A549 (cell line): ENCODE measurements at regions of chr1 and their contacts with region 1.

Region 1: DNA sequence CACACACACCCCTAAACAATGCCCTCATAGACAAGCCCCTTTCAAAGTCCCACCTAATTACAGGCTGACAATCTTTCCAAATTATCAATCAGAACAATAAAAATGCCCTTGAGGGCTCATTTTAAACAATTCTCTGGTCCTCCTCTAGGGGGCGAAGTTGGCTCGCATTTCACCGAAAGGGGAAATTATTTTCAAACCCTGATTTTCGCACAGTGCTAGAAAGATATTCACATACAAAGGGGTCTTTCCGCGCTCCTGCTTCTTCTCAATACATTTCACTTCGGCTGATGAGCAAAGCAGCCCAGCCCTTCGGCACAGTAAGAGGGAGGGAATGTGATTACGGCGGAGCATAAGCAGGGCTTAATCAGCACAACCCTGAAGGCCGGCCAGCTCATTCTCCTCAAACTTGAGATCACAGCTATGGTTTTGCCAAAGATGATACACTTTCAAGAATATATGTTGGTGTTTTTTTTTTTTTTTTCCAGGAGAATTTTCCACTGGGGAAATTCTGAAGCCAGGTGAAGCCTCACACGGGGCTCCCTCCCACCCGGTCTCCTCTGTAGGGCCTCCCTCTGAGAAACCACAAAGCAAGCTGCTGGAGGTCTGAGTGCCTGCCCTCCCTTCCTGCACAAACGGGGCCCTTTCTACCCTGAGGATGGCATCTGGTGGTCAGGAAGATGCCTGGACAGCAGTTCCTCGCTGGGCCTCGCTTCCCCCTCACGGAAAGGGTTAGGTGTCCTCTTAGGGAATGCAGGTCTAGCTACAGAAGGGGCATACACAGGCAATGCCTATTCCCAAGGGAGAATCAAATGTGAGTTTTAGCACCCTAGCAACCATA is 66.9 kb downstream of the GNG12 start:
- DNase-seq: peak in 1 of 2 experiments; percentile 53
- ATAC-seq: peak; percentile 69 to 78
- H3K4me3 ChIP-seq: no peak overlapping the region; the same call in 2 of the 3 replicates
- H3K27ac ChIP-seq: peak overlapping the region; percentile 76 to 92
- H3K4me1 ChIP-seq: peaks cover 77% of the 10 kb centered on the region
- CTCF ChIP-seq: peak; percentile 76
- EP300 ChIP-seq: no peak
- POLR2A ChIP-seq: no peak
- RAD21 ChIP-seq: peak; percentile 83 to 89

Region 2: GRCh38 chr1:67468066-67468718 is 298.2 kb before region 1 on chr1:
- CTCF ChIA-PET with region 1: no interaction called
- POLR2A ChIA-PET with region 1: no interaction called
- DNase-seq: no peak
- ATAC-seq: no peak
- H3K4me3 ChIP-seq: no peak overlapping the region
- H3K27ac ChIP-seq: no peak overlapping the region
- H3K4me1 ChIP-seq: no peaks in the 10 kb centered on the region
- CTCF ChIP-seq: no peak
- EP300 ChIP-seq: no peak
- POLR2A ChIP-seq: no peak
- RAD21 ChIP-seq: no peak

Region 3: GRCh38 chr1:67540733-67541125 is 225.6 kb before region 1 on chr1:
- CTCF ChIA-PET with region 1: interaction called, 197 read pairs
- POLR2A ChIA-PET with region 1: no interaction called
- DNase-seq: no peak
- ATAC-seq: no peak
- H3K4me3 ChIP-seq: no peak overlapping the region
- H3K27ac ChIP-seq: no peak overlapping the region
- H3K4me1 ChIP-seq: no peaks in the 10 kb centered on the region
- CTCF ChIP-seq: no peak
- EP300 ChIP-seq: no peak
- POLR2A ChIP-seq: no peak
- RAD21 ChIP-seq: no peak

Region 4: DNA sequence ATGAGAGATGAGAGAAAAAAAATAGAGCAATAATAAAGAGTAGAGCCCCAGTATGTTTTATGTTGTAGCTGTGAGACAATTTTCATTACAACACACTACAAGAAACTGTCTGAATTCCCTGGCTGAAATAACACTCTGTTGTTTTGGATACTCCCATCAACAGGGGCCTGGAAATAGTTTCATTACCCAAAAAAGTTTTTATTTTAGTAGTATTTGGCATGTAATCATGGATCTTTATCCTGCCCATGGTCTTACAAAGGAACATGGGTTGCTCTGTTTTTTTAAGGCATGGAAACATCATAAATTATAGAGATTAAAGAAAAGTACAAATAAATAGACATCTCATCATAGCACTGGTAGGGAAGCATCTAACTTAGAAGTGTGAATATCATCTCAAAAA is 10.7 kb after region 1 on chr1:
- CTCF ChIA-PET with region 1: interaction called, 16 read pairs
- POLR2A ChIA-PET with region 1: no interaction called
- DNase-seq: no peak
- ATAC-seq: no peak
- H3K4me3 ChIP-seq: no peak overlapping the region
- H3K27ac ChIP-seq: no peak overlapping the region
- H3K4me1 ChIP-seq: peaks cover 3% of the 10 kb centered on the region; the same call in 2 of the 3 replicates
- CTCF ChIP-seq: no peak
- EP300 ChIP-seq: no peak
- POLR2A ChIP-seq: no peak
- RAD21 ChIP-seq: no peak

Region 5: GRCh38 chr1:67832737-67833601 is 66.6 kb after region 1 on chr1 and contains the start of gene GNG12:
- CTCF ChIA-PET with region 1: interaction called, 27 read pairs
- POLR2A ChIA-PET with region 1: interaction called, 11 read pairs
- DNase-seq: peak; percentile 63 to 78
- ATAC-seq: peak; percentile 89 to 92
- H3K4me3 ChIP-seq: peak within 1 kb of the TSS; percentile 86
- H3K27ac ChIP-seq: peak within 1 kb of the TSS; percentile 97 to 99
- H3K4me1 ChIP-seq: peaks cover 42% of the 10 kb centered on the region
- CTCF ChIP-seq: no peak
- EP300 ChIP-seq: no peak
- POLR2A ChIP-seq: peak; percentile 16; the same call in 1 of the 2 replicates
- RAD21 ChIP-seq: peak in 1 of 2 experiments; percentile 27; a peak in 2 of 5 replicates
- polyA plus RNA-seq, gene GNG12: 104 and 132 TPM in 2 replicates

Region 6: GRCh38 chr1:67853704-67854103 is 87.3 kb after region 1 on chr1:
- CTCF ChIA-PET with region 1: interaction called, 37 read pairs
- POLR2A ChIA-PET with region 1: no interaction called
- DNase-seq: peak; percentile 59 to 83
- ATAC-seq: peak; percentile 76 to 86
- H3K4me3 ChIP-seq: no peak overlapping the region
- H3K27ac ChIP-seq: peak overlapping the region; percentile 35 to 88
- H3K4me1 ChIP-seq: peaks cover 26% of the 10 kb centered on the region
- CTCF ChIP-seq: peak; percentile 71
- EP300 ChIP-seq: no peak
- POLR2A ChIP-seq: no peak
- RAD21 ChIP-seq: peak; percentile 95 to 97

Region 7: DNA sequence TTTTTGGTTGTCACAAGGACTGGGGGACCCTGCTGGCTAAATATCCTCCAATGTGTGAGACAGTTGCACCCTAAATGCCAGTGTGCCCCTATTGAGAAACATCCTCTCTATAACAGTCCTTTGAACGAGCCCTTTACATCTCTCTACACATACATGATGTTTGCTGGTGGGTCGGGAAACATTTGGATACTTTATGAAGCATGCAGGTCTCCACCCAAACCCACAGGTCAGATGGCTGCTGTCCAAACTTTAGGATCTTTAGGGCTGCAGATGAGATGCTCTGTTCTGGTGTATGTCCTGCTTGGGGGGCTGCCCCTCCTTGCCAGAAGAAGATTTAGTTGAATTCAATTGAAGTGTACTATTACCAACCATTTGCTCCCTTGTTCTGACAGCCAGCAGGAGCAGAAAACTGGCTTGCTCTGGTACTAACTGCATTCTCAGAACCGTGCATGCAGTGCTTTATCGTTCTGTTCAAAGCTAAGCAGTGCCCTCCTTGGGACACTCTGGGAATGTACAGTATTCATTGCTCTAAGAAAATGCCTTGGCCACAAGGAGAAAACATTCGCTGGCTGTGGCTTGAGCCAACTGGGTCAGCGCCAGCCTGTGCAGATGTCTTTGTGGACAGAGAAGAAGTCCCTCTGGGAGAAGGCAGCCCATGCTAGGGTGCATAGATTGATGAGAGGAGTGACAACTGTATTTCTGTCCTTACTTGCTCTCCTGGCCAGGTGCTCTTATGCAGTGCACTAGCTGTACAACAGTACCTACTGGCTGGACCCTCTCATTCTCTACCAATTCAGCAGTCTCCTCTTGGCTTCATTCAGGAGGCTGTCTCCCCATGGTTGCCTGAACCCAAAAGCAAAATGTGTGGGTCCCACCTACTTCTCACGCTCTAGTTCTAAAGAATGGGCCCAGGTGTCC is 345.4 kb after region 1 on chr1:
- CTCF ChIA-PET with region 1: interaction called, 25 read pairs
- POLR2A ChIA-PET with region 1: no interaction called
- DNase-seq: peak; percentile 56 to 79
- ATAC-seq: peak; percentile 93 to 97
- H3K4me3 ChIP-seq: no peak overlapping the region
- H3K27ac ChIP-seq: peak overlapping the region; percentile 63 to 87
- H3K4me1 ChIP-seq: peaks cover 26% of the 10 kb centered on the region
- CTCF ChIP-seq: peak; percentile 68
- EP300 ChIP-seq: no peak
- POLR2A ChIP-seq: no peak
- RAD21 ChIP-seq: peak; percentile 95

Region 8: GRCh38 chr1:68188060-68188538 is 421.7 kb after region 1 on chr1:
- CTCF ChIA-PET with region 1: no interaction called
- POLR2A ChIA-PET with region 1: no interaction called
- DNase-seq: no peak
- ATAC-seq: no peak
- H3K4me3 ChIP-seq: no peak overlapping the region
- H3K27ac ChIP-seq: no peak overlapping the region
- H3K4me1 ChIP-seq: peaks cover 7% of the 10 kb centered on the region; the same call in 2 of the 3 replicates
- CTCF ChIP-seq: no peak
- EP300 ChIP-seq: no peak
- POLR2A ChIP-seq: no peak
- RAD21 ChIP-seq: no peak